ENCODE measurements at regions of chr7 and their contacts with region 1.

Region 1: DNA sequence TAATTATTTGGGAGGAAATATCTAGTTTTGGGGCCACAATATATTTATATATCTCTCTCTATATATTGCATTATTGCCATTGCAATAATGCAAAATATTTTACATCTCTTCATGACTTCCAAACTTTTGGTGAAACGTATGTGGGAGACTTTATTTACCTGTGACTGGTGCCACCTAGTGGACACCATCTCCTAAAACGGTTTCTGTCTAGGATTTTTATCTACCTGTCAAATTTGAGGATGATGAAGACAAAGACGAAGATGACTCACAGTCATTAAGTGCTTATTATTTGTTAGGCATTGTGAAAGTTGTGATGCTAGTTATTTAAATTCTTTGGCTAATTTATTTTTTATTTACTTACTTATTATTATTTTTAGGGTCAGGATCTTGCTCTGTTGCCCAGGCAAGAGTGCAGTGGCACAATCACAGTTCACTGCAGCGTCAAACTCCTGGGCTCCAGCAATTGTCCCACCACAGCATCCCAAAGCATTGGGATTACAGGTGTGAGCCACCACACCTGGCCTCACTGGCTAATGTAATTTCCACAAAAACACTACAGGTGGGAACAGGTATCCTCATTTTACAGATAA is 18.7 kb upstream of the CBLL1 start:
- DNase-seq: peak; percentile 77
- H3K4me3 ChIP-seq: no peak overlapping the region
- H3K27ac ChIP-seq: no peak overlapping the region
- H3K4me1 ChIP-seq: no peaks in the 10 kb centered on the region
- H3K27me3 ChIP-seq: peaks cover 12 to 17% of the 10 kb centered on the region in 2 experiments
- CTCF ChIP-seq: peak; percentile 41 to 47
- POLR2A ChIP-seq: no peak

Region 2: GRCh38 chr7:107462740-107463444 is 262.4 kb before region 1 on chr7:
- CTCF ChIA-PET with region 1: interaction called, 83 read pairs
- POLR2A ChIA-PET with region 1: no interaction called
- dilution Hi-C with region 1: no loop called
- intact Hi-C with region 1: loop called (anchors 1 kb)
- DNase-seq: peak; percentile 67
- H3K4me3 ChIP-seq: no peak overlapping the region
- H3K27ac ChIP-seq: no peak overlapping the region
- H3K4me1 ChIP-seq: no peaks in the 10 kb centered on the region
- H3K27me3 ChIP-seq: no peaks in the 10 kb centered on the region
- CTCF ChIP-seq: peak; percentile 65 to 71
- POLR2A ChIP-seq: no peak

Region 3: DNA sequence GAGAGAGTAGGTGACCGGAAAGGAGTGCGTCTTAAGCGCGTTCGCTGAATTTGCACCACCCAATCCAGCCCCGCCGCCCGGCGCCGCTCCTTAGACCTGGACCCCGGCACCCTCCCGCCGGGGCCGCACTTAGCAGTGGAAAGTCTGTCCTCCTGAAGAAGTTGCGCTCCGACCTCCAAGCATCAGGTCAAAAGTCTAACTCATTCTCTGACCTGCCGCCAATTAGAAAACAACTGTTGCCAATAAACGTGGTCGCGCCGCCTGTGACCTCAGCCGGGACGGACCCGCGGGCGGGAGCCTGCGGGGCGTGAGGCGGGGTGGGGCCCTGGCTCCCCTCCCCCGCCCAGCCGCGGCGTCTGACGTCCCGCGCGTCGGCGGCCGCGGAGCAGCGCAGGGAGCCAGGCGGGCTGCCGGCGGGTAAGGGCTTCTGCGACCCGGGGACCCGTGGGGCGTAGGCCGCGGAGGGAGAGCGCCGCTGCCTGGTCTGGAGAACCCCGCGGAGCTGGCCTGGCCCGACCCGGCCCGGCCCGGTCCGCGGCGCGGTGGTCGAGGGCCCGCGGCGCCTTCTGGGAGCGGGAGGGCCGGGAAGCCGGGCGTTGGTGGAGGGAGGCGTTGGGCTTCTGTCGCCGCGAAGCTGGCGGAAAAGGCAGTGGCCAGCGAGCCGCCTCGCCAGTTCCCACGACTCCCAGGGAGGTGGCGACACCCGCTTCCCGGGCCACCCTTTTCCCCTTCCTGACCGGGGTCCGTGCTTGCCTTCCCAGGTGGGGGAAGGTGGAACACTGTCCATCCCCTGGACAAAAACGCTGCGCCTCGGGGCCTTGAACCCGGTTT is 145.1 kb before region 1 on chr7 and contains the start of gene BCAP29:
- CTCF ChIA-PET with region 1: no interaction called
- POLR2A ChIA-PET with region 1: no interaction called
- dilution Hi-C with region 1: no loop called
- intact Hi-C with region 1: loop called (anchors 1 kb)
- DNase-seq: peak; percentile 73
- H3K4me3 ChIP-seq: peak within 1 kb of the TSS; percentile 74 to 99 (median 99)
- H3K27ac ChIP-seq: peak within 1 kb of the TSS; percentile 95
- H3K4me1 ChIP-seq: peaks cover 24% of the 10 kb centered on the region
- H3K27me3 ChIP-seq: no peaks in the 10 kb centered on the region
- CTCF ChIP-seq: no peak
- POLR2A ChIP-seq: peak; percentile 77
- total RNA-seq, gene BCAP29: 162 and 175 TPM in 2 replicates

Region 4: GRCh38 chr7:107622429-107622828 is 102.8 kb before region 1 on chr7:
- CTCF ChIA-PET with region 1: no interaction called
- POLR2A ChIA-PET with region 1: no interaction called
- dilution Hi-C with region 1: no loop called
- intact Hi-C with region 1: loop called (anchors 5 kb)
- DNase-seq: peak; percentile 61
- H3K4me3 ChIP-seq: no peak overlapping the region
- H3K27ac ChIP-seq: peak overlapping the region; percentile 16
- H3K4me1 ChIP-seq: peaks cover 15% of the 10 kb centered on the region
- H3K27me3 ChIP-seq: no peaks in the 10 kb centered on the region
- CTCF ChIP-seq: no peak
- POLR2A ChIP-seq: no peak

Region 5: DNA sequence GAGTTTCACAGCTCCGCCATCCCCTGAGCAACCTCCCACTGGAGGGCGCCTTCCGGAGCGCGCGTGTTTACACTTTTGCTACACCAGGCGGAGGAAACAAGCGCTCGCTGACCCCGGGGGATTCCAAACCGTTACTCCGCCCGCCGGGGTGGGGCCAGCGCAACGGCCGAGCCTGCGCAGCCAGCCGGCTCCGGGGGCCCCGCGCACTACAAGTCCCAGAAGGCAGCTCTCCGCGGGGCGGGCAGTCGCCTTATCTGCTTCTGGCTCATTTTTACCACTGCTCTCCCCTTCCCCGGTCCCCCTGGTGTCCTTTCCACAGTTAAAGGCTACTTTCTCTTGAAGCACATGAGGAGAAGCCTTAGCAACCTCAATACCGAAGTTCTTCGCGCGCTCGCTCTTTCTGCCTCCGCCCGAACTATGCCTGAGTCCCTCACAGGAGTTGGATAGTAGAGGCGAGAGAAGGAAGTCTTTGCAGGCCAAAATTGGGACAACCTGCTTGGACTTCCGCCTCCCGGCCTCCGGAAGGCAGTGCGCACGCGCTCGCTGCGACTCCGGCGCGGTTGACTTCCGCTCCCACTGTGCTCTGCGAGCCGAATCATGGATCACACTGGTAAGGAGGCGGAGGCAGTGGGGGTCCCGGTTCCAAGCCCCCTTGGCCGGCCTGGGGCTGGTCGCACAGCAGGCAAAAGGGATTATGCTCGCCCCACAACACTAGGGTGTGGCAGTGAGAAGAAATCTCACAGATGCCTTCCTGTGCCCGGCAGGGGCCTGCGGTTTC is 18.5 kb after region 1 on chr7 and contains the start of gene CBLL1:
- CTCF ChIA-PET with region 1: interaction called, 13 read pairs
- POLR2A ChIA-PET with region 1: no interaction called
- dilution Hi-C with region 1: no loop called
- intact Hi-C with region 1: no loop called
- DNase-seq: peak; percentile 98
- H3K4me3 ChIP-seq: peak within 1 kb of the TSS; percentile 45 to 94 (median 79)
- H3K27ac ChIP-seq: peak within 1 kb of the TSS; percentile 96
- H3K4me1 ChIP-seq: peaks cover 38% of the 10 kb centered on the region
- H3K27me3 ChIP-seq: no peaks in the 10 kb centered on the region
- CTCF ChIP-seq: peak; percentile 65 to 76
- POLR2A ChIP-seq: peak; percentile 2
- total RNA-seq, gene CBLL1: 30.6 and 31.1 TPM in 2 replicates

Region 6: DNA sequence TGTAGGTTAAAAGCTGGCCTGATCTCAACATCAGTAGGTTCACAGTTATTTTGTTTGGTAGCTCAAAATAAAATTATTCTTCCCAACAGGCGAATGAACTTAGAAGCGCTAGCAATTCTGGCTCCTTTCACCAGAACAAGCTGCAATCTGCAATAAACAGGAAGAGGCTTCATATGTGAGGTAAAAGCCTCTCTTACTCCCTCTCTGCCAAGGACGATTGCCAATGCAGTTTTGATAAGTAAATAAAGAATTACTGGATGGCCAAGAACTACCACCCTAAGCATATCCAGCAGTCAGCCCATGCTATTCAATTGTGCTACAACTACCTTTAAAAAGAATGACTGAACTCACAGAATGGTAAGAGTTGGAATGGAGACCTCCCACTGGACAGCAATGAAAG is 554.9 kb after region 1 on chr7:
- CTCF ChIA-PET with region 1: no interaction called
- POLR2A ChIA-PET with region 1: no interaction called
- dilution Hi-C with region 1: no loop called
- intact Hi-C with region 1: no loop called
- DNase-seq: peak; percentile 64
- H3K4me3 ChIP-seq: no peak overlapping the region
- H3K27ac ChIP-seq: peak overlapping the region; percentile 10
- H3K4me1 ChIP-seq: peaks cover 55% of the 10 kb centered on the region
- H3K27me3 ChIP-seq: no peaks in the 10 kb centered on the region
- CTCF ChIP-seq: no peak
- POLR2A ChIP-seq: no peak

Measured in endothelial cell of umbilical vein (primary cell).